ENCODE measurements at regions of chr2 and their contacts with region 1.

Region 1: DNA sequence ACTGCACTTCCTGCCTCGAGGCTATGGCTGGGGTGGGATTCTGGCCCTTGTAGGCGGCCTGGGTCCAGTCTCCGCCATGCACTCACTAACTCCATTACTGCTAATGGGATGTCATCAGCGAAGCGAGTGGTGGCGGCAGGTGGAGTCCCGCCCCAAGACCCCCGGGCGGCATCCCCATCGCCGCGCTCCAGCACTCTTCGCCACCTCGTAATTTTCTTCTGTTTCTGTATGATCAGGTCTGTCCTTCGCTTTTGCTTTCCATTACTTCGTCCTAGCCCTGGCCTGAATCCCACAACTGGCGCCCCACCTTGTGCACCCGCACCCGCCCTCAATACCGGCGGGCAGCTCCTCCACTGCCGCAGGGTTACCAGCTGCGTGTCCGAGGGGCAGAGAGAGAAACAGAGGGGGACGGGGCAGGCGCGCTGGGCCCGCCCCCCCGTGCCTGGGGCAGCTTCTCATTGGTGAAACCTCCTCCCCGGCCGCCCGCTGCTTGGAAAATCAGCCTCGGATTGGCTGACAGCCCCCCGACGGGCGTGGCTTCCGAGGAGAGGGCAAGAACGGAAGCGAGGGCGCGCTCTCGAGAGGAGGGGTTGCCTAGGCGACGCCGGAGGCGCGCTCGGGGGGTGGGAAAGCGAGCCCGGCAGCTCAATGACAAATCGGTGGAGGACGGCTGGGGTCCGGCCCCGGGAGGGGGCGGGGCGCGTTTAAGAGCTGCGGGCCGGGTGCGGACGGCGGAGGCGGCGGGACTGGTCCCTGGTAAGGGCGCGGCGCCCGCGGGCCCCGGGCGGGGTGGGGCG is at the start of gene RALB:
- DNase-seq: peak; percentile 98
- ATAC-seq: peak; percentile 94
- H3K4me3 ChIP-seq: peak within 1 kb of the TSS; percentile 63 to 95 (median 92)
- H3K4me3 Mint-ChIP-seq: peak within 1 kb of the TSS; percentile 98
- H3K27ac ChIP-seq: peak within 1 kb of the TSS; percentile 65 to 73
- H3K27ac Mint-ChIP-seq: peak within 1 kb of the TSS; percentile 96
- H3K4me1 ChIP-seq: peaks cover 51 to 54% of the 10 kb centered on the region in 2 donors
- H3K4me1 Mint-ChIP-seq: peaks cover 60% of the 10 kb centered on the region
- H3K27me3 ChIP-seq: peaks cover 0 to 9% (median 2%) of the 10 kb centered on the region in 4 experiments
- H3K27me3 Mint-ChIP-seq: peaks cover 10% of the 10 kb centered on the region
- CTCF ChIP-seq: no peak
- total RNA-seq, gene RALB: 35.9 and 36.7 TPM in 2 replicates

Region 2: DNA sequence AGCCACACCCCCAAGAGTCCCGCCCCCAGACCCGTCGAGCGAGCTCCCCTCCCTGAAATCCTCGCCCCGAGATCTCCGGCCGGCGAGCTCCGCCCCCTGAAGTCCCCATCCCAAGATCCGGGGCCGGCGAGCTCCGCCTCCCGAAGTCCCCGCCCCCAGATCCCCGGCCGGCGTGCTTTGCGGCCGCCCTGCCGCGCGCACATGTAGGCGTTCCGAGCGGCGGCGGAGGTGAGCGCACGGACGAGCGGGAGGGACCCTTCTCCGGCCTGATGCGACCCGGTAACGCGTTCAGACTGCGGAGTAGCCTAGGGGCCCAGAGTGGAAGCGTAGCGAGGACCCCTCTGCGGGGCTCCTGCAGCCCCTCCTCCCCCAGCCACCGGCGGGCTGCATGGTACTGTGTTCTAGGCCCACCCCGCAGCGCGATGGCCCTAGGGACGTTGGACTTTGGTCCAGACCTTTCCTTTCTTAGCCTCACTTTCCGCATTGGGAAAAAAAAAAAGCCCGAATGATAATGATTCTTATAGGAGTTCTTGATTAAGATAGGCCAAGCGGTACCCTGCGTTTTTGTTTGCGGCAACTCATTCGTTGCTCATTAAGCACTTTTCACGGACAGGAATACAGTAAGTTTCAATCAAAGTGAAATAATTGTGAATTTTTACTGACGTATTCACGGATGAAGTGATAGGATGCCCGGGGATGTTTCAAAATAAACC is 573.3 kb before region 1 on chr2 and contains the start of gene TMEM177:
- CTCF ChIA-PET with region 1: no interaction called
- POLR2A ChIA-PET with region 1: no interaction called
- intact Hi-C with region 1: loop called (anchors 1 kb)
- DNase-seq: peak; percentile 90
- ATAC-seq: peak; percentile 96
- H3K4me3 ChIP-seq: peak within 1 kb of the TSS; percentile 76 to 100 (median 93)
- H3K4me3 Mint-ChIP-seq: peak within 1 kb of the TSS; percentile 84
- H3K27ac ChIP-seq: peak within 1 kb of the TSS; percentile 50 to 60
- H3K27ac Mint-ChIP-seq: peak within 1 kb of the TSS; percentile 84
- H3K4me1 ChIP-seq: peaks cover 10 to 20% of the 10 kb centered on the region in 2 donors
- H3K4me1 Mint-ChIP-seq: peaks cover 23% of the 10 kb centered on the region
- H3K27me3 ChIP-seq: no peaks in the 10 kb centered on the region
- H3K27me3 Mint-ChIP-seq: no peaks in the 10 kb centered on the region
- CTCF ChIP-seq: no peak
- total RNA-seq, gene TMEM177: 10.6 and 12.1 TPM in 2 replicates

Region 3: GRCh38 chr2:120012771-120013596 is 239.4 kb before region 1 on chr2 and contains the start of gene EPB41L5:
- CTCF ChIA-PET with region 1: interaction called, 3 read pairs
- POLR2A ChIA-PET with region 1: interaction called, 4 read pairs
- intact Hi-C with region 1: loop called (anchors 2 kb)
- DNase-seq: peak; percentile 87
- ATAC-seq: peak; percentile 90
- H3K4me3 ChIP-seq: peak within 1 kb of the TSS; percentile 65 to 88 (median 77)
- H3K4me3 Mint-ChIP-seq: peak within 1 kb of the TSS; percentile 91
- H3K27ac ChIP-seq: peak within 1 kb of the TSS; percentile 58 to 80
- H3K27ac Mint-ChIP-seq: peak within 1 kb of the TSS; percentile 69
- H3K4me1 ChIP-seq: peaks cover 11 to 12% of the 10 kb centered on the region in 2 donors
- H3K4me1 Mint-ChIP-seq: peaks cover 30% of the 10 kb centered on the region
- H3K27me3 ChIP-seq: no peaks in the 10 kb centered on the region
- H3K27me3 Mint-ChIP-seq: no peaks in the 10 kb centered on the region
- CTCF ChIP-seq: no peak
- total RNA-seq, gene EPB41L5: 14.0 and 15.0 TPM in 2 replicates

Region 4: DNA sequence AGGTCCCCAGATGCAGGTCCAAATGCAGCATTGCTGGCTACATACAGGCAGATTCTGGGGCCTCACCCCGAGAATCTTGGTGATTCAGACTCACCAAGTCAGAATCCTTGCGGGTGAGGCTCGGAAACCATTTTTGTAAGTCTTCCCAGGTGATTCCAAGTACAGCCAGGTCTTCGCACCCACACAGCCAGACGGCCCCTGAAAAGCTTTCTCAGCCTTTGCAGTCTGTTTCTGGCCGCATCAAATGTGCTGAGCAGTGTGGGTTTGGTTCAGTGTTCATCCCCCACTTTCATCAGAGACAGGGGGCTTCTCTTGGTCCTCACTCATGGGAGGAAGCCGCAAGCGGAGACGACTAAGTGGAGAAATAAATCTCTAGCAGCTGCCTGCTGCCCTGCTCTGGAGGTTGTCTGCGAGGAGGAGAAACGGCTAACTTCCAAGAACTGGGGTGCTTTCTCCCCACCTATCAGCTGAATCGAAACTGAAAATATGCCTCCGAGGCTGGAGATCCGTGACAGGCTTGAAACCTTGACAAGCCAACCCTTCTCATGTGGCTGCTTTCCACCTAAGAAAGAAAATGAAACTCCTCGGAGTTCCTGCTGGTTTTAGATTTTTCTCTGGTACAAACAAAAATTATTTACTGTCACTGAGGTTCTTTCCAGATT is 20.3 kb before region 1 on chr2:
- CTCF ChIA-PET with region 1: interaction called, 10 read pairs
- POLR2A ChIA-PET with region 1: interaction called, 13 read pairs
- intact Hi-C with region 1: loop called (anchors 1 kb)
- DNase-seq: peak; percentile 85
- ATAC-seq: peak; percentile 91
- H3K4me3 ChIP-seq: peak overlapping the region; percentile 48 to 78 (median 73)
- H3K4me3 Mint-ChIP-seq: peak overlapping the region; percentile 91
- H3K27ac ChIP-seq: peak overlapping the region; percentile 57 to 87
- H3K27ac Mint-ChIP-seq: peak overlapping the region; percentile 92
- H3K4me1 ChIP-seq: peaks cover 26 to 37% of the 10 kb centered on the region in 2 donors
- H3K4me1 Mint-ChIP-seq: peaks cover 50% of the 10 kb centered on the region
- H3K27me3 ChIP-seq: no peaks in the 10 kb centered on the region
- H3K27me3 Mint-ChIP-seq: no peaks in the 10 kb centered on the region
- CTCF ChIP-seq: no peak

Region 5: DNA sequence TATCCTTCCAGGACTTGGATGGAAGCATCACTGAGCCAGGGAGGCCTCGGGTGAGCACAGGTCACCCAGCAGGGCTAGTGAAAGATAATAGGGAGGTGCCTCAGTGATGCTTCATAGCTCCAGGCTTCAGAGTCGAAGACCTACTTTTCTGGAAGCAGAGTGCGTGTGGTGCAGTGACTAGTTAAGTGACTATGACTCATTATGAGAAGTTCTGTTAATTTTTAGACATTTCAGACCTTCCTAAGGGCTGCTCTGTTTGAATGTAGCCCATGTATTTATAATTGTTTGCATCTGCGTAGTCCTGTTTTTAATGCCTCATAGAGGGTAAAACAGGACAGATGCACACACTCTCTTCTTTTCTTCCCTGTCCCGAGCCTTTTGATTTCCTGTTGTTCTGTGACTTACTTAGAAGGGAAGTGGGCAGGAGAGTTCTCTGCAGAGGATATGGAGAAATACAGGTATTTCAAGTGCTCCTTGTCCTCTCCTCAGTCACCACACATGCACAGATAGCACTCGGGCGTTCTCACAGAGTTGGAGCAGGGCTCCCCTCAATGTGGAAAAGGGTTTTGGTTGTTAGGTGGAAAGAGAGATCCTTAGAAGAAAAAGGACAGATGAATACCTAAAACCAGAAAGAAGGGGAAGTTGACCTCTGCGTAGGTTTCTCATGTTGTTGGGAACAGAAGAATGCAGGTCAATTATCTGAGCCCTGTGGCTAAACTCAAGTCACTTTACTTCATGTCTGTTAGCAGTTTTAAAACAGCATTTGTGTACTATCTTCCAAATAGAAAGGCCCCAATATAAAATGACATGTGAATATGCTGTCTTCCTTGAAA is 35.0 kb after region 1 on chr2:
- CTCF ChIA-PET with region 1: no interaction called
- POLR2A ChIA-PET with region 1: no interaction called
- intact Hi-C with region 1: loop called (anchors 5 kb)
- DNase-seq: no peak
- ATAC-seq: peak; percentile 36
- H3K4me3 ChIP-seq: no peak overlapping the region
- H3K4me3 Mint-ChIP-seq: no peak overlapping the region
- H3K27ac ChIP-seq: peak overlapping the region in 1 of 2 donors; percentile 61
- H3K27ac Mint-ChIP-seq: peak overlapping the region; percentile 77
- H3K4me1 ChIP-seq: peaks cover 7 to 10% of the 10 kb centered on the region in 2 donors
- H3K4me1 Mint-ChIP-seq: peaks cover 24% of the 10 kb centered on the region
- H3K27me3 ChIP-seq: no peaks in the 10 kb centered on the region
- H3K27me3 Mint-ChIP-seq: no peaks in the 10 kb centered on the region
- CTCF ChIP-seq: no peak

Measured in B cell (primary cell).